HCT116 (cell line): ENCODE measurements at regions of chr3 and their contacts with region 1.

Region 1: DNA sequence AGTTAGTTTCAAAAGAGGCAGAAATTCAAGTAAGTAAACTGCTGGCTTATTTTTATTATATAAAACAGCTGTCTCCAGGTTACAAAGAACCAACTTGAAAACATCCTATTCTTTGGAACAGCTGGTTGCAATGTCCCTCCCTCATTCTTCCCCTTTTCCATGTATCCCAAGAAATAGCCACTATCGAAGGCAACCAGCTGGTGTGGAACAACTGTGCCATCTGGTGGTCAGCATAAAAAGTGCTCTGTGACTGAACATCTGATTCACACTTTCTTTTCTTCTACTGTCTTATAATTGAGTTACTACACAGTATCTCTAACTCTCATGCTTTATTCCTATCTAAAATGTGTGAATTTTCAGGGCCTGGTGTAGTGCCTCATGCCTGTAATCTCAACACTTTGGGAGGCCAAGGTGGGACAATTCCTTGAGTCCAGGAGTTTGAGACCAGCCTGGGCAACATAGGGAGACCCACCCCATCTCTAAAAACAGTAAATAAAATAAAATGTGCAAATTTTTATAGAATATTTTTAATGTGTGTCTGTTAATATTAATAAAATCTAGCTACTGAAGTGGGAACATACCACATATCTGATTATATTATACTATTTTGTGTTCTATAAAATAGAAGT is 9.6 kb downstream of the OSBPL11 start:
- DNase-seq: peak; percentile 45
- ATAC-seq: peak; percentile 87
- H3K4me3 ChIP-seq: no peak overlapping the region
- H3K27ac ChIP-seq: no peak overlapping the region
- H3K4me1 ChIP-seq: no peaks in the 10 kb centered on the region
- H3K27me3 ChIP-seq: no peaks in the 10 kb centered on the region
- CTCF ChIP-seq: peak; percentile 71 to 92 (median 80); a peak in 5 of 6 replicates
- POLR2A ChIP-seq: no peak
- RAD21 ChIP-seq: peak; percentile 90

Region 2: GRCh38 chr3:124928333-124929202 is 657.1 kb before region 1 on chr3:
- CTCF ChIA-PET with region 1: interaction called, 30 read pairs
- POLR2A ChIA-PET with region 1: no interaction called
- RAD21 ChIA-PET with region 1: no interaction called
- intact Hi-C with region 1: loop called (anchors 1 kb)
- DNase-seq: peak; percentile 60
- ATAC-seq: peak; percentile 91
- H3K4me3 ChIP-seq: no peak overlapping the region
- H3K27ac ChIP-seq: no peak overlapping the region
- H3K4me1 ChIP-seq: peaks cover 0 to 3% of the 10 kb centered on the region in 2 experiments; a peak in 1 of 4 replicates
- H3K27me3 ChIP-seq: no peaks in the 10 kb centered on the region
- CTCF ChIP-seq: peak; percentile 73 to 84 (median 82); a peak in 5 of 6 replicates
- POLR2A ChIP-seq: no peak
- RAD21 ChIP-seq: peak; percentile 83

Region 3: DNA sequence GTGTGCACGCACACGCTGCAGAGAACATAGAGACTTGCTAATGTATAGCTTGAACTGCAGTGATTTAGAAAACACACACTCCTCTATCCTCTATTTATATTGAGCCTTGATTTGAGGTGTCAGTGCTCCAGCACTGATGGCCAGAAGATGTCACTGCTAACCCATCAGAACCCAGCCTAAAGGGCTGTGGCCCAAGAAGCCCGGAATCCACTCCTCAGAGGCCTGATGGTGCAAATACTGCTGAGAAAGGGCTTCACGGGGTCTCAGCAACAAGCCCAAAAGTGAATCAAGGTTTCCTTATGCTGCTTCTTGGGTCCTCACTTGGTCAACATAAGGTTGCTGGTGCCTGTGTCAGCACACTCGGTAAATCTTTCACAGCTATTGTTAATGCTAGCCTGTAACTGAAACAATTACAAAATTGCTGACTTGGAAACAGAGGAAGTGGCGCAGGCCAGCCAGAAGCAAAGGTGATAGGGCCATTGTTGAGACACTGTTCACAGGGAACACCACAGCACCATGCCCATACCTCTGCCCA is 590.2 kb before region 1 on chr3:
- CTCF ChIA-PET with region 1: interaction called, 12 read pairs
- POLR2A ChIA-PET with region 1: no interaction called
- RAD21 ChIA-PET with region 1: interaction called in 1 of 2 experiments, 3 read pairs
- intact Hi-C with region 1: loop called (anchors 1 kb)
- DNase-seq: peak; percentile 34
- ATAC-seq: peak; percentile 98
- H3K4me3 ChIP-seq: no peak overlapping the region
- H3K27ac ChIP-seq: no peak overlapping the region
- H3K4me1 ChIP-seq: no peaks in the 10 kb centered on the region
- H3K27me3 ChIP-seq: no peaks in the 10 kb centered on the region
- CTCF ChIP-seq: peak; percentile 65 to 84 (median 79)
- POLR2A ChIP-seq: no peak
- RAD21 ChIP-seq: peak; percentile 94

Region 4: GRCh38 chr3:125150525-125151441 is 434.9 kb before region 1 on chr3:
- CTCF ChIA-PET with region 1: interaction called, 6 read pairs
- POLR2A ChIA-PET with region 1: no interaction called
- RAD21 ChIA-PET with region 1: no interaction called
- intact Hi-C with region 1: loop called (anchors 2 kb)
- DNase-seq: peak; percentile 66
- ATAC-seq: peak; percentile 97
- H3K4me3 ChIP-seq: no peak overlapping the region
- H3K27ac ChIP-seq: no peak overlapping the region
- H3K4me1 ChIP-seq: peaks cover 0 to 7% of the 10 kb centered on the region in 2 experiments; a peak in 1 of 4 replicates
- H3K27me3 ChIP-seq: no peaks in the 10 kb centered on the region
- CTCF ChIP-seq: peak; percentile 62 to 90 (median 83)
- POLR2A ChIP-seq: no peak
- RAD21 ChIP-seq: peak; percentile 69

Region 5: DNA sequence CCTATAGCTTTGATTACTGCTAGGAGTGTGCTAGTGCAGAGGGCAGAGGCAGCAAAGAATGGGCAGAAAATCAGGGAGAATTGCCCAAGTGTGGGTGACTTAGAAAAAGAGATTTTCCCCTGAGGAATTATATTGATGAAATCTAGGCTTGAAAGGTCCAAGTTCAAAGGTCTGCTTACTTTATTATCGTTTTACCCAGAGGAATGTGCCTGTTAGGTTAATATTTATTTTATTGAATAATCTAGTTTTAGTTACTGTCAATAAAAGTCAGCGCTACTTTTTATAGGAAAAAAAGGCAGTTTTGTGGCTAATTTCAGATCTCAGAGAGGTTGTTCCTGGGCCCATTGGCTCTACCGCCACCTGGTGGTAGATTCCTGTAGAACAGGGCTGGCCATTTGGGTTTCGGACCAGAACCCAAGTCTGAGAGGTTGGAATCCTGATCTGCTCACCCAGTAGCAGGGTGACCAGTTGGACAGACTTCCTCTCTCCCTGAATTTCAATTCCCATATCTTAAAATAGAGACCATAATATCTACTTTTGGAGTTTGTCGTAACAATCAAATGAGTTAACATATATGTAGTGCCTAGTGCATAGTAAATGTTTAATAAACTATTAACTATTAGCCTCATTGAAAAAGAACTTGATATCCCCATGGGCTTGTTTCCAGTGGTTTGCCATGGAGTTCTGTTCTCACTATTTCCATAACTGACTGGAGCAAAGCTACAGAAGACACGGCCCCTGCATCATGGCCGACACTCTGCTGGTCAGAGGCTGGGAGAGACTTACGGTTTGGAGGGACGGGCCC is 147.9 kb before region 1 on chr3:
- CTCF ChIA-PET with region 1: interaction called, 3 read pairs
- POLR2A ChIA-PET with region 1: no interaction called
- RAD21 ChIA-PET with region 1: no interaction called
- intact Hi-C with region 1: loop called (anchors 1 kb)
- DNase-seq: peak; percentile 29
- ATAC-seq: peak; percentile 81
- H3K4me3 ChIP-seq: no peak overlapping the region
- H3K27ac ChIP-seq: no peak overlapping the region
- H3K4me1 ChIP-seq: no peaks in the 10 kb centered on the region
- H3K27me3 ChIP-seq: no peaks in the 10 kb centered on the region
- CTCF ChIP-seq: peak; percentile 83 to 97 (median 96)
- POLR2A ChIP-seq: no peak
- RAD21 ChIP-seq: peak; percentile 87